ENCODE measurements at regions of chr1 and their contacts with region 1.

Region 1: GRCh38 chr1:160376525-160377131 is 9.8 kb downstream of the NHLH1 start:
- DNase-seq: peak in 6 of 9 donors; percentile 21 to 45 (median 36)
- ATAC-seq: peak; percentile 73
- H3K4me3 ChIP-seq: no peak overlapping the region
- H3K4me3 Mint-ChIP-seq: peak overlapping the region in 5 of 10 donors; percentile 5 to 54 (median 15)
- H3K27ac ChIP-seq: no peak overlapping the region
- H3K27ac Mint-ChIP-seq: peak overlapping the region in 2 of 9 donors; percentile 4 to 37
- H3K4me1 ChIP-seq: peaks cover 8 to 11% of the 10 kb centered on the region in 2 donors
- H3K4me1 Mint-ChIP-seq: peaks cover 7 to 19% (median 14%) of the 10 kb centered on the region in 7 donors
- H3K27me3 ChIP-seq: no peaks in the 10 kb centered on the region
- H3K27me3 Mint-ChIP-seq: peaks cover 0 to 7% (median 0%) of the 10 kb centered on the region in 5 donors

Region 2: DNA sequence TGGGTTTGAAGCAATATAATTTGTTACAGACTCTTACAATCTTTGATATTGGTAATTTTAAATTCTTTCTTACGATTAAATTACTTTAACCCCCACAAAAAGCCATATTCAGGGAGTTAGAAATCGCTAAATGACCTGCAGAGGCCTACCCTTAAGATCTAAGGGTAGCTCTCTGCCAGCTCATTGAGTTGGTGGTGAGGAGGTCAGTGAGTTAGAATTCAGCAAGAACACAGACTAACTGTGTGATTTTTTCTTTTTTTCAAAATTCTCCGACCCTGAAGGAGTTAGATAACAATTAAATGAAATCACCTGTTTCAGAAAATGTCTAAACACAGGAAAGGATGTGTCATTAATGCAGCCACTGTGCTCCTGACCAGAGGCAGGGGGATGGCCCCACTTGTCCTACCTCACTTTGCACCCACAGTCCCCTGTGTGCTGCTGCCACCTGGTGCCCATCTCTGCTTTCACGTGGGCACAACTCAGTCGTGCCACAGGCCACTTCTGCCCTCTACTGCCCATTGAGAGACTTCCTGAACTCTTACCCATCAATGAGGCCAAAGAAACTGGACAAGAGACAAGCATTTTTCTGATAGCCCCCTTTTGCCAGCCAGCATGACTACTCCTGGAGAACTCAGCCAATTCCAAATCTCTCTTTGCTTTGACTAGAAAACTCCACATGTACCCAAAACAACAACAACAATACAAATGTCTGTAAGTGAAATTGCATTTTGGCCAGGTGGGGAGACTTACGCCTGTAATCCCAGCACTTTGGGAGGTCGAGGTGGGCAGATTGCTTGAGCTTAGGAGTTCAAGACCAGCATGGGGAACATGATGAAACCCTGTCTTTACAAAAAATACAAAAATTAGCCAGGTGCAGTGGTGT is 485.1 kb before region 1 on chr1:
- CTCF ChIA-PET with region 1: no interaction called
- POLR2A ChIA-PET with region 1: no interaction called
- intact Hi-C with region 1: loop called in 1 of 2 experiments (anchors 5 kb)
- DNase-seq: peak; percentile 53 to 76 (median 65)
- ATAC-seq: peak; percentile 96
- H3K4me3 ChIP-seq: no peak overlapping the region
- H3K4me3 Mint-ChIP-seq: no peak overlapping the region
- H3K27ac ChIP-seq: no peak overlapping the region
- H3K27ac Mint-ChIP-seq: peak overlapping the region in 1 of 9 donors; percentile 37
- H3K4me1 ChIP-seq: peaks cover 0 to 17% of the 10 kb centered on the region in 2 donors
- H3K4me1 Mint-ChIP-seq: peaks cover 0 to 19% (median 0%) of the 10 kb centered on the region in 7 donors
- H3K27me3 ChIP-seq: no peaks in the 10 kb centered on the region
- H3K27me3 Mint-ChIP-seq: peaks cover 0 to 24% (median 0%) of the 10 kb centered on the region in 5 donors

Region 3: DNA sequence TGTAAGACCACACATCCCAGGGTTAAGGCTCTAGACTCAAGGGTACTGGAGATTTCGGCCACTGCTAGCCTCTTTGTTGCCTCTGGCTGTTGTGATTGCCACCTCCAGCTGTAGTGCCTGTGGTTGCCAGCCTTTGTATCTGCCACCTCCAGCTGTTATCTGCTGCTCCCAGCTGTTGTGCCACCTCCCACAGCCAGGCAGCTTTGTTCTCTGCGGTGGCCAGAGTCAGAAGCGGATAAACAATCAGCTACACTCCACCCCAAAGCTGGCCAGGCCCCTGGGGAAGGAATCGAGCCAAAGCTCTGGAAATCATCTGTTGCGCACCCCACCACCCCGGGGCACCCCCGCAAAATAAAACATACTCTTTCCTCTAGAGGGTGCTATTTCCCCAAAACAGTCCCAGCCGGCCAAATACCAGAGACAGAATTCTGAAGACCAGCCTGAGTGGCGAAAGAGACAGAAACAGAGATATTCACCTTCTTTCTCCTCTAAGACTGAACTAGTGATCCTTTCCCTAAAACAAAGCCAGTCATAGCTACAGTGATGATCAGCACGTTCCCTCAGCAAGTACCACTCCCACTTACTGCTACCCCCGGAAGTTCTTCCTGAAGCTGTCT is 330.0 kb before region 1 on chr1:
- CTCF ChIA-PET with region 1: no interaction called
- POLR2A ChIA-PET with region 1: no interaction called
- intact Hi-C with region 1: loop called in 1 of 2 experiments (anchors 1 kb)
- DNase-seq: peak in 8 of 9 donors; percentile 24 to 66 (median 44)
- ATAC-seq: peak; percentile 89
- H3K4me3 ChIP-seq: no peak overlapping the region
- H3K4me3 Mint-ChIP-seq: peak overlapping the region; percentile 62 to 86 (median 82)
- H3K27ac ChIP-seq: no peak overlapping the region
- H3K27ac Mint-ChIP-seq: peak overlapping the region in 5 of 9 donors; percentile 18 to 65 (median 43)
- H3K4me1 ChIP-seq: peaks cover 0 to 8% of the 10 kb centered on the region in 2 donors
- H3K4me1 Mint-ChIP-seq: peaks cover 7 to 16% (median 12%) of the 10 kb centered on the region in 7 donors
- H3K27me3 ChIP-seq: no peaks in the 10 kb centered on the region
- H3K27me3 Mint-ChIP-seq: peaks cover 0 to 32% (median 16%) of the 10 kb centered on the region in 5 donors

Region 4: GRCh38 chr1:160108888-160109662 is 267.6 kb before region 1 on chr1:
- CTCF ChIA-PET with region 1: no interaction called
- POLR2A ChIA-PET with region 1: no interaction called
- intact Hi-C with region 1: loop called in 1 of 2 experiments (anchors 2 kb)
- DNase-seq: peak in 6 of 9 donors; percentile 30 to 43 (median 38)
- ATAC-seq: peak; percentile 64
- H3K4me3 ChIP-seq: no peak overlapping the region
- H3K4me3 Mint-ChIP-seq: no peak overlapping the region
- H3K27ac ChIP-seq: no peak overlapping the region
- H3K27ac Mint-ChIP-seq: no peak overlapping the region
- H3K4me1 ChIP-seq: no peaks in the 10 kb centered on the region
- H3K4me1 Mint-ChIP-seq: peaks cover 0 to 14% (median 0%) of the 10 kb centered on the region in 7 donors
- H3K27me3 ChIP-seq: no peaks in the 10 kb centered on the region
- H3K27me3 Mint-ChIP-seq: peaks cover 0 to 17% (median 6%) of the 10 kb centered on the region in 5 donors

Region 5: GRCh38 chr1:160291248-160292220 is 85.1 kb before region 1 on chr1:
- CTCF ChIA-PET with region 1: interaction called, 8 read pairs
- POLR2A ChIA-PET with region 1: interaction called, 3 read pairs
- intact Hi-C with region 1: loop called in 1 of 2 experiments (anchors 1 kb)
- DNase-seq: peak; percentile 24 to 82 (median 74)
- ATAC-seq: peak; percentile 98
- H3K4me3 ChIP-seq: no peak overlapping the region
- H3K4me3 Mint-ChIP-seq: no peak overlapping the region
- H3K27ac ChIP-seq: no peak overlapping the region
- H3K27ac Mint-ChIP-seq: peak overlapping the region; percentile 0 to 88 (median 40)
- H3K4me1 ChIP-seq: peaks cover 0 to 3% of the 10 kb centered on the region in 2 donors
- H3K4me1 Mint-ChIP-seq: peaks cover 2 to 7% (median 6%) of the 10 kb centered on the region in 7 donors
- H3K27me3 ChIP-seq: no peaks in the 10 kb centered on the region
- H3K27me3 Mint-ChIP-seq: no peaks in the 10 kb centered on the region

Region 6: GRCh38 chr1:160338580-160338979 is 38.0 kb before region 1 on chr1:
- CTCF ChIA-PET with region 1: no interaction called
- POLR2A ChIA-PET with region 1: no interaction called
- intact Hi-C with region 1: no loop called
- DNase-seq: no peak
- ATAC-seq: no peak
- H3K4me3 ChIP-seq: no peak overlapping the region
- H3K4me3 Mint-ChIP-seq: no peak overlapping the region
- H3K27ac ChIP-seq: no peak overlapping the region
- H3K27ac Mint-ChIP-seq: peak overlapping the region in 4 of 9 donors; percentile 3 to 51 (median 18)
- H3K4me1 ChIP-seq: peaks cover 15 to 16% of the 10 kb centered on the region in 2 donors
- H3K4me1 Mint-ChIP-seq: peaks cover 21 to 58% (median 41%) of the 10 kb centered on the region in 7 donors
- H3K27me3 ChIP-seq: no peaks in the 10 kb centered on the region
- H3K27me3 Mint-ChIP-seq: no peaks in the 10 kb centered on the region